ENCODE measurements at regions of chr14 and their contacts with region 1.

Region 1: GRCh38 chr14:52313903-52314594 is at the start of gene PTGER2:
- DNase-seq: peak; percentile 79 to 87
- ATAC-seq: peak; percentile 88 to 94 (median 91)
- H3K4me3 ChIP-seq: peak within 1 kb of the TSS; percentile 29 to 74 (median 57)
- H3K27ac ChIP-seq: peak within 1 kb of the TSS in 5 of 10 donors; percentile 21 to 92 (median 32)
- H3K4me1 ChIP-seq: peaks cover 2 to 86% (median 15%) of the 10 kb centered on the region in 9 donors
- H3K27me3 ChIP-seq: peaks cover 0 to 53% (median 39%) of the 10 kb centered on the region in 7 donors
- CTCF ChIP-seq: no peak
- total RNA-seq, gene PTGER2: 0.11 to 2.4 (median 0.33) TPM

Region 2: GRCh38 chr14:52179141-52179790 is 134.8 kb before region 1 on chr14:
- intact Hi-C with region 1: no loop called
- DNase-seq: no peak
- ATAC-seq: no peak
- H3K4me3 ChIP-seq: no peak overlapping the region
- H3K27ac ChIP-seq: no peak overlapping the region
- H3K4me1 ChIP-seq: no peaks in the 10 kb centered on the region
- H3K27me3 ChIP-seq: no peaks in the 10 kb centered on the region
- CTCF ChIP-seq: no peak

Region 3: DNA sequence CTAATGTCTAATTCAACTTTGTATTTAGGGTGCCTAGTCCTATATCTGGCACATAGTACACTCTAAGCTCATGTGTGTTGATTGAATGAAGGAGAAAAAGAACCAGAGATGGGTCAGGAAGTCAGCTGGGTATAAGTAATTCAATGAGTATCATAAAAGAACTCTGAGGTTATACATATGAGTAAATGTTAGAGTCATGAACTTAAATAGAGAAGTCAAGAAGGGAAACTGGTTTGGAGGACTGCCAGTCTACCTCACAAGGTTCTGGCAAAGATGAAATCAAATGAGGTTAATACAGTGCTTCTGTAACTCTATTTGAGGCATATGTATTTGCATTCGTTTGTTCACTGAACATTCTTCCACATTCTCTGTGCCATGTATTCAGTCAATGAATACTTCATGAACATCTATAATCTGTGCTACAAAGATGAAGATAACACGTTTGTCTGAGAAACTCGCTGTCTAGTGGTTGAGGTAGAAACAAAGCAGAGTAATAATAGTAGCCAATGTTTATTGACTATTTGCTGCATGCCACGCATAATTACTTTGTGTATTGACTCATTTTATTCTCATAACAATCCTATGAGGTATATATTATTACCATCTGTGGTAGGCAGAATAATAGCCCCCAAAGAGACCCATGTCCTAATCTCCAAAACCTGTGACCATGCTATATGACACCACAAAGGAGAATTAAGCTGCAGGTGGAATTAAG is 88.9 kb after region 1 on chr14:
- intact Hi-C with region 1: loop called in 1 of 10 experiments (anchors 10 kb)
- DNase-seq: no peak
- ATAC-seq: no peak
- H3K4me3 ChIP-seq: no peak overlapping the region
- H3K27ac ChIP-seq: no peak overlapping the region
- H3K4me1 ChIP-seq: peaks cover 0 to 29% (median 0%) of the 10 kb centered on the region in 9 donors
- H3K27me3 ChIP-seq: peaks cover 0 to 51% (median 0%) of the 10 kb centered on the region in 7 donors
- CTCF ChIP-seq: no peak